Right cardiac atrium (tissue), 5 donors: ENCODE measurements at regions of chr18 and their contacts with region 1.

Region 1: DNA sequence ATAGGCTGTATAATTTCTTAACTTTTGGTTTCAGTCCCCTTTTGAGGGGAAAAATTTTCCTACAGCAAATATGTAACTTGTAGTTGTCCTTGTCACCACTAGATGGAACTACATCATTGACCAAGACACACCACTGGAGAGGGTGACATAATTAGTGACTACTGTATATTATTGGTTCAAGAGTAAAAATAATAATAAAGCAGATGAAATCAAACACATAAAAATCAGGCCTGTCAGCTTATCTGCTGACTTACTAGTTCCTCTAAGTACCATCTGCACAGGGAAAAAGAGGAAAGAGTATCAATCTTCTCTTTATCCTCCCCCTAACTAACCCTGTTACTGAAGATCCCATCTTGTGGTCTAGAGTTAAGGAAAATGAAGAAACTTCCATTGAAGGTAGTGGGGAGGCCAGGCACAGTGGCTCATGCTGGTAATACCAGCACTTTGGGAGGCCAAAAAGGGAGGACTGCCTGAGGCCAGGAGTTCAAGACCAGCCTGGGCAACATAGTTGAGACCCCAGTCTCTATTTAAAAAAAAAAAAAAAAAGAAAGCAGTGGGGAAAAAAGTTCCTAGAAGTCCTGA is 29.6 kb upstream of the ENOSF1 start:
- DNase-seq: no peak
- ATAC-seq: peak; percentile 65 to 79
- H3K4me3 ChIP-seq: no peak overlapping the region
- H3K27ac ChIP-seq: no peak overlapping the region
- H3K4me1 ChIP-seq: no peaks in the 10 kb centered on the region
- H3K27me3 ChIP-seq: no peaks in the 10 kb centered on the region

Region 2: GRCh38 chr18:824179-824578 is 82.2 kb after region 1 on chr18:
- intact Hi-C with region 1: loop called in 1 of 4 experiments (anchors 5 kb)
- DNase-seq: no peak
- ATAC-seq: no peak
- H3K4me3 ChIP-seq: no peak overlapping the region
- H3K27ac ChIP-seq: no peak overlapping the region
- H3K4me1 ChIP-seq: no peaks in the 10 kb centered on the region
- H3K27me3 ChIP-seq: no peaks in the 10 kb centered on the region

Region 3: DNA sequence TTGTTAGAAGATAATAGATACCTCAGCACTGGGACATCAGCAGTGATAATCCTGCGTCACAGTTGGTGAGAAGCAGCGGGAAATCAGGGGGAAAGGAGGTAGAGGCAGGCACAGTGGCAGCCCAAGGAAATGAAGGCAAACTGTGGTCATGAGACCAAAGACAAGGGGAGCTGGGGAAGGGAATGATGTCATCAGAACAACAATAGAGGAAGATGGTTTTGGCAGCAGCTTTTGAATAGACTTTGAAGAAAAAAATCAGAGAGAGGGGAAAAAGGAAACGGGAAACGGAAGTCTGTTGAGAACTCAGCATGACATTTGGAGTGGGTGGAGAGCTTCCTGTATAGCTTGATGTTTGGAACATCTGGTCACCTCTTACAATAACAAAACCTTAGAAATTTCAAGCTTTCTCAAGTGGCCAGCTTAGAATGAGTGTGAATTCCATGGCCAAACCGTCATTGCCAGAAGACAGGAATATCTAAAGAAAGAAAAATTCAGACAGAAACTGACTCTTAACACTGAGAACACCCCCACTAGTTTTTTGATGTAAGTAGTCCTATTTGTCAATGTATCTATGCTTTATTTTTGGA is 88.4 kb after region 1 on chr18:
- intact Hi-C with region 1: loop called (anchors 2 to 5 kb)
- DNase-seq: peak in 1 of 3 donors; percentile 25
- ATAC-seq: peak; percentile 84 to 92
- H3K4me3 ChIP-seq: no peak overlapping the region
- H3K27ac ChIP-seq: peak overlapping the region; percentile 11
- H3K4me1 ChIP-seq: no peaks in the 10 kb centered on the region
- H3K27me3 ChIP-seq: no peaks in the 10 kb centered on the region

Region 4: GRCh38 chr18:839224-840022 is 97.4 kb after region 1 on chr18:
- intact Hi-C with region 1: loop called in 3 of 4 experiments (anchors 5 kb)
- DNase-seq: peak; percentile 87 to 96 (median 95)
- ATAC-seq: peak; percentile 93 to 94
- H3K4me3 ChIP-seq: no peak overlapping the region
- H3K27ac ChIP-seq: no peak overlapping the region
- H3K4me1 ChIP-seq: no peaks in the 10 kb centered on the region
- H3K27me3 ChIP-seq: no peaks in the 10 kb centered on the region